RWPE1 (cell line): ENCODE measurements at regions of chr1 and their contacts with region 1.

Region 1: DNA sequence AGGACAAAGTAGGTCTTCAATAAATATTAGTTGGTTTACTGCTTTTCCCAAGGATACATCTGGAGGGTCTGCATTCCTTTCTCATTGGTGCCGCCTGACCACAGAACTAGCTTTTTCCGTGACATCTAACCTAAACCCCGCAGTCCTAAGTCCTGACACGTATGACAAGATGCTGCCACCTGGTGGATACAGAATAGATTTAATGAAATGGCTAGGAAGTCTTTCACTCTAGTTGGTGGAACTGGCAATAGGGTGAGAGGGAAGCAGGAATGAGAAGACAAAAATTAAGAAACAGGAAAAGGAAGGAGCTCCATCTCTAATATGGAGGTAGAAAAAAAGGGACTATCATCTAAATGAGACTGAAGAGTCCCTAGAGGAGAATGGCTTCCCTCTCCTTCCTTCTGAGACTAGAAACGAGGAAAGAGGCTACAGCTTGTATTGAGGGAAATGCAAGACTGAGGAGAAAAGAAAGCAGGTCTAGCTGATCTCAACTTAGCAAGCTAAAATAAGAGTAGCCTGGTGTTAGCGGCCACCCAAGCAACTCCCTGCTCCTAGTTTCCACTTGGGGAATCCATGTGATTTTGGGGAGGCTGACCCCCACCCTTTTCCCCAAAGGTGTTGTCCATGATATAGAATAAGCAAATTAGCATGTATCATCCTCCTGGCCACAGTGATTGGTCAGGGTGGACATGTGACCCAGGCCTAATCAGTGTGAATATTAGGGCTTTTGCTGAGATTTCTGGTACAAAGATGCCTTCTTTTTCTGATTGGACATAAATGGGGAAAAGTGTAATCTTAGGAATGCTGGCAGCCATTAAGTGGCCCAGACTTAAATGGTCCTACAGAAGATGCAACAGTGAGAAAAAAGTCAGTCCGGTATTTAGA is 5.9 kb downstream of the RFX5 start:
- DNase-seq: peak; percentile 60
- H3K27ac ChIP-seq: no peak overlapping the region
- CTCF ChIP-seq: peak; percentile 71

Region 2: GRCh38 chr1:151292207-151293030 is 48.7 kb before region 1 on chr1:
- CTCF ChIA-PET with region 1: interaction called, 10 read pairs
- POLR2A ChIA-PET with region 1: no interaction called
- DNase-seq: no peak
- H3K27ac ChIP-seq: peak overlapping the region; percentile 49
- CTCF ChIP-seq: no peak

Region 3: DNA sequence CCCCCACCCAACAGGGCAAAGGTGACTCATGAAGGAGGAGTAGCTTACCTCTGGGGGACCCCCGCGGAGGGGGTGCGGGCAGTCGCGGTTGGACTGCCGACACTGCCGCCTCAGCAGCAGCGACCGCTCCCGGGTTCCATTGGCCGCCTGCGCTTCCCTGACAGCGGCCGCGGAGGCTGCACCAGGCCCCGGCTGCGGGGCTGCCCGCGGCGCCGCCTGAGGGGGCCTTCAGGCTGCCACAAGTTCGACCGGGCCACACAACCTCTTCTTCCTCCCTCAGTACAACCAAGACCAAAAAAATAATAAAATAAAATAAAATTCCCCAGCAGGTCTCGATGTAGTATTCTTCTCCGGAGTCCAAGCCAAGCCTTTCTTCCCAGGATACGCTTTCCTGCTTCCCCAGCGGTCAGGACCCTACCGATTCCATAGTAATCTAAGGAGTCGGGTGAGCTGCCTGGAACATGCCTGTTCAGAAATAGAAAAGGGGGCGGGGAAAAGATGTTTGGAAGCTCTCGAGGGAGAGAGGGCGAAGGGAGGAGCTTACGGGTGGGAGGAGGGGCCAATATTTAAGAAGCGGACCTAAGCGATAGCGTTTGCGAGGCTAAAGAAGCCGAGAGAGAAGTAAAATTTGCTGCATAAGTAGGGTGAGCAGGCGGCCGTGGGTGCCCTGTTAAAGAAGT is 13.7 kb before region 1 on chr1 and contains the start of gene PI4KB:
- CTCF ChIA-PET with region 1: interaction called, 12 read pairs
- POLR2A ChIA-PET with region 1: no interaction called
- DNase-seq: peak; percentile 98
- H3K27ac ChIP-seq: peak within 1 kb of the TSS; percentile 88
- CTCF ChIP-seq: no peak

Region 4: GRCh38 chr1:151356696-151357095 is 15.6 kb after region 1 on chr1:
- CTCF ChIA-PET with region 1: no interaction called
- POLR2A ChIA-PET with region 1: no interaction called
- DNase-seq: no peak
- H3K27ac ChIP-seq: no peak overlapping the region
- CTCF ChIP-seq: no peak